ENCODE measurements at regions of chr17 and their contacts with region 1.

Region 1: DNA sequence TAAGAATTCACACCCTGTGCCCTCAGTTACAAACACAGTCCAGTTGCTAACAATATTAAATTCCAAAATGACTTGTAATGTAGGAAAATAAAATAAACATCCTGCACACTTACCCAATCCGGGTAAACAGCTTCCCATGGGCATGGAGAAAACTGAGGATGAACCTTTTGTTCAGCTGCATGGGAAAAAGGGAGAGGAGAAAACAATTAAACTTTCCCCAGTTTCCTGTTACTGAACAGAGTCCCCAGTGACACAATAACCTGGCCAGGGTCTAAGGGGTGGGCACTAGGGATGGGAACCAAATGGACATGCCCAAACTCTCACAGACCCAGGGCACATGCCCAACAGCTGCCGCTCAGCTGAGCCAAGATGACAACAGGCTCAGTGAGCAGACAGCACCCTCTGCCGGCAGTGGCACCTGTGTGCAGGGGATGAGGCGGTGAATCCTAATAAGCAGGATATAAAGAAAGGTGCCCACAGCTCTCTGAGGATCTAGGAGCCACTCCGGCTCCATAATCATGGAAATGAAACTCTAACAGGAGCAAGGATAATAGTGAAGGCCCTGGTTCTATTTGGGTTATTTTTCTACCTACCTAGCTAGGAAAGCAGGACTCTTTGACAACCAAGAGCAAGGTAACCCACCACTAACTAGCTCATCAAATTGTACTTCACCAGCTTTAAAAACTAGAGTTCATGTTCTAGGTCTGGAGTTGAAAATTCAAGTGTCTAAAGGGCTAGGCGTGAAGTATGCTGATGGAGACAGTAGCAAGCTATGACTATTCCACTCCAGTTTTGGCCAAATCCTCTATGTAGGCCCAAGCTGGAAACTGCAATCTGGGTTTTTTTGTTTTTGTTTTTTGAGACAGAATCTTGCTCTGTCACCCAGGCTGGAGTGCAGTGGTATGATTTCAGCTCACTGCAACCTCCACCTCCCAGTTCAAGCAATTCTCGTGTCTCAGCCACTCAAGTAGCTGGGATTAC is 58.8 kb downstream of the SMG6 start:
- DNase-seq: peak; percentile 97
- H3K4me3 ChIP-seq: no peak overlapping the region
- H3K27ac ChIP-seq: peak overlapping the region; percentile 86
- H3K4me1 ChIP-seq: peaks cover 22% of the 10 kb centered on the region
- H3K27me3 ChIP-seq: no peaks in the 10 kb centered on the region
- CTCF ChIP-seq: peak; percentile 91 to 95
- POLR2A ChIP-seq: no peak

Region 2: GRCh38 chr17:2049333-2050299 is 195.2 kb before region 1 on chr17:
- CTCF ChIA-PET with region 1: interaction called, 455 read pairs
- POLR2A ChIA-PET with region 1: interaction called, 4 read pairs
- dilution Hi-C with region 1: no loop called
- intact Hi-C with region 1: loop called (anchors 1 kb)
- DNase-seq: peak; percentile 78
- H3K4me3 ChIP-seq: peak overlapping the region; percentile 46 to 57 (median 48)
- H3K27ac ChIP-seq: peak overlapping the region; percentile 1
- H3K4me1 ChIP-seq: peaks cover 20% of the 10 kb centered on the region
- H3K27me3 ChIP-seq: peaks cover 2 to 11% of the 10 kb centered on the region in 2 experiments
- CTCF ChIP-seq: no peak
- POLR2A ChIP-seq: no peak

Region 3: DNA sequence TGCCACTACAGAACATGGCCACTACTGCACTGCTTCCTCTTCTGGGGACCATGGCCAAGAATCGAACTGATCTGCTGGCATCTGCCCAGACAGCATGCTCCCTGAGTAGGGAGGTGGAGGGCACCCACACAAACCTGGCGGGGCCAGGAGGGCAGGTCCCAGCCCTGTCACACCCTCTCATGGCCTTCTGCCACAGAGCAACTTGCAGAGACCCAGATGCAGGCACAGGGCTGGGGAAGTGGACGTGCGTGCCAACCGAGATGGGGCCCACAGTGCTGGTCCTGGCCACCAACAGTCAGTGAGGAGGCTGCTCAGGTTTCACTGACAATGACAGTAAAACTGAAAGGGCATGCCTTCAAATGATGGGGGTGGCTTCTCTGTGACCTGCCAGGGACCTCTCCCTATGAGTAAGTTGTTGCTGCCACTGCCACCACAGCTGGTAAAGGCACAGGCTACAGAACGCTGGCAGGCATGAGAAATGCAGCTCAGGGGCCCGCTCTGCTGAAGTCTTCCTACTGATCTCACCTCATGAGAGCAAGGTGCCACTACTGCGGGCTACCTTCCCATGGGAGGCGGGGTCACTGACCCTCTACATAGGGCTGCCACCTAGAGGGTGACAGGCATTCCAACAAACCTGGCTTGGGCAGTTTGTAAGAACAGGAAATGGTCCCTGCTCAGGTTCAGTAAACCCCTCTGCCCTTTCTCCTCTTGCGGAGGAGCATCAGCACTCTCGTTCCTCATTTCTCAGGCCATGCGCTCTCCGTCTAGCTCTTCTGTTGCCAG is 174.4 kb before region 1 on chr17:
- CTCF ChIA-PET with region 1: interaction called, 455 read pairs
- POLR2A ChIA-PET with region 1: interaction called, 4 read pairs
- dilution Hi-C with region 1: no loop called
- intact Hi-C with region 1: loop called (anchors 1 kb)
- DNase-seq: no peak
- H3K4me3 ChIP-seq: no peak overlapping the region
- H3K27ac ChIP-seq: peak overlapping the region; percentile 93
- H3K4me1 ChIP-seq: peaks cover 62% of the 10 kb centered on the region
- H3K27me3 ChIP-seq: no peaks in the 10 kb centered on the region
- CTCF ChIP-seq: no peak
- POLR2A ChIP-seq: no peak

Region 4: GRCh38 chr17:2122641-2123302 is 122.1 kb before region 1 on chr17:
- CTCF ChIA-PET with region 1: interaction called, 22 read pairs
- POLR2A ChIA-PET with region 1: no interaction called
- dilution Hi-C with region 1: no loop called
- intact Hi-C with region 1: no loop called
- DNase-seq: peak; percentile 73
- H3K4me3 ChIP-seq: no peak overlapping the region
- H3K27ac ChIP-seq: peak overlapping the region; percentile 0
- H3K4me1 ChIP-seq: peaks cover 24% of the 10 kb centered on the region
- H3K27me3 ChIP-seq: no peaks in the 10 kb centered on the region
- CTCF ChIP-seq: no peak
- POLR2A ChIP-seq: no peak

Region 5: GRCh38 chr17:2192367-2193057 is 52.3 kb before region 1 on chr17:
- CTCF ChIA-PET with region 1: interaction called, 10 read pairs
- POLR2A ChIA-PET with region 1: no interaction called
- dilution Hi-C with region 1: no loop called
- intact Hi-C with region 1: loop called (anchors 1 kb)
- DNase-seq: peak; percentile 98
- H3K4me3 ChIP-seq: no peak overlapping the region
- H3K27ac ChIP-seq: peak overlapping the region; percentile 88
- H3K4me1 ChIP-seq: peaks cover 40% of the 10 kb centered on the region
- H3K27me3 ChIP-seq: no peaks in the 10 kb centered on the region
- CTCF ChIP-seq: no peak
- POLR2A ChIP-seq: peak; percentile 75

Region 6: DNA sequence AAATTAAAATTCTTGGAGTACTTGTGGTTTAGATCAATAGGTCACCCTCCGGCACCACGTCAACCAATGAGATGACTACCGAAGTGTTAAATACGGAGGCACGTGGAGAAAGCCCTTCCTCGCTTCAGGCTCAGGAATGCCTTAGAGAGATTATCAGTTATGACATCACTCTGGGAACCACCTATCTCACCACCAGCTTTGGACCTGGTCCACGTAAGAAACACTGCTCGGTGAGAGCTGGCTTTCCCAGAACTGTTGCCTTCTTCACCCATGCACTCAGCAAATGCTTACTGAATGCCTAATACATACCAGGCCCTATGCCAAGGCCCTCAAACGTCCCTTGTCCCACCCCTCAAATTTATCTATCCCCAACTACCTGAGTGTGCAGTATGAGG is 12.6 kb before region 1 on chr17:
- CTCF ChIA-PET with region 1: interaction called, 18 read pairs
- POLR2A ChIA-PET with region 1: no interaction called
- dilution Hi-C with region 1: no loop called
- intact Hi-C with region 1: no loop called
- DNase-seq: peak; percentile 34
- H3K4me3 ChIP-seq: no peak overlapping the region
- H3K27ac ChIP-seq: peak overlapping the region; percentile 13
- H3K4me1 ChIP-seq: peaks cover 9% of the 10 kb centered on the region
- H3K27me3 ChIP-seq: no peaks in the 10 kb centered on the region
- CTCF ChIP-seq: no peak
- POLR2A ChIP-seq: no peak

Measured in endothelial cell of umbilical vein (primary cell).